Natural killer cell (primary cell): ENCODE measurements at regions of chr4 and their contacts with region 1.

Region 1: DNA sequence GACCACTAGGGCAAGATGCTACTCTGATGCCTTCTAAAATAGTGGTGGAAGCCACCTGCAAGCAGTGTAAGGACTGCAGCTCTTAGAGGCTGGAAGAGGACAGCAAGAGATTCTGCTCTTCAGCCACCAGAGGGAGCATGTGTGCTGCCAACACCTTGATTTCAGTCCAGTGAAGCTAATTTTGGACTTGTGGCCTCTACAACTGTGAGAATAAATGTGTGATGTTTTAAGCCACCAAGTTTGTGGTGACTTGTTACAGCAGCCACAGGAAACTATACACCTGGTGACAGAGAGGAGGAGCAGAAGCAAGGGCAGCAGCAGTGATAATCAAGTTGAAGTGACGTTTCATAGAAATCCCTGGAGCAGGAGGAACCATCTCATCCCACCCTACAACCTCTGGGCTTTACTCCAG is 55.9 kb downstream of the FGFBP1 start:
- DNase-seq: peak; percentile 41 to 81
- ATAC-seq: peak; percentile 92 to 97 (median 96)
- H3K4me3 ChIP-seq: no peak overlapping the region
- H3K4me3 Mint-ChIP-seq: peak overlapping the region; percentile 73
- H3K27ac ChIP-seq: no peak overlapping the region
- H3K27ac Mint-ChIP-seq: peak overlapping the region; percentile 54 to 68
- H3K4me1 ChIP-seq: peaks cover 16% of the 10 kb centered on the region
- H3K4me1 Mint-ChIP-seq: peaks cover 28% of the 10 kb centered on the region in 2 donors
- H3K27me3 ChIP-seq: no peaks in the 10 kb centered on the region
- H3K27me3 Mint-ChIP-seq: no peaks in the 10 kb centered on the region
- CTCF ChIP-seq: peak; percentile 88

Region 2: GRCh38 chr4:15587649-15588048 is 295.0 kb before region 1 on chr4:
- intact Hi-C with region 1: no loop called
- DNase-seq: no peak
- ATAC-seq: no peak
- H3K4me3 ChIP-seq: no peak overlapping the region
- H3K4me3 Mint-ChIP-seq: no peak overlapping the region
- H3K27ac ChIP-seq: no peak overlapping the region
- H3K27ac Mint-ChIP-seq: no peak overlapping the region
- H3K4me1 ChIP-seq: no peaks in the 10 kb centered on the region
- H3K4me1 Mint-ChIP-seq: no peaks in the 10 kb centered on the region
- H3K27me3 ChIP-seq: no peaks in the 10 kb centered on the region
- H3K27me3 Mint-ChIP-seq: no peaks in the 10 kb centered on the region
- CTCF ChIP-seq: no peak

Region 3: DNA sequence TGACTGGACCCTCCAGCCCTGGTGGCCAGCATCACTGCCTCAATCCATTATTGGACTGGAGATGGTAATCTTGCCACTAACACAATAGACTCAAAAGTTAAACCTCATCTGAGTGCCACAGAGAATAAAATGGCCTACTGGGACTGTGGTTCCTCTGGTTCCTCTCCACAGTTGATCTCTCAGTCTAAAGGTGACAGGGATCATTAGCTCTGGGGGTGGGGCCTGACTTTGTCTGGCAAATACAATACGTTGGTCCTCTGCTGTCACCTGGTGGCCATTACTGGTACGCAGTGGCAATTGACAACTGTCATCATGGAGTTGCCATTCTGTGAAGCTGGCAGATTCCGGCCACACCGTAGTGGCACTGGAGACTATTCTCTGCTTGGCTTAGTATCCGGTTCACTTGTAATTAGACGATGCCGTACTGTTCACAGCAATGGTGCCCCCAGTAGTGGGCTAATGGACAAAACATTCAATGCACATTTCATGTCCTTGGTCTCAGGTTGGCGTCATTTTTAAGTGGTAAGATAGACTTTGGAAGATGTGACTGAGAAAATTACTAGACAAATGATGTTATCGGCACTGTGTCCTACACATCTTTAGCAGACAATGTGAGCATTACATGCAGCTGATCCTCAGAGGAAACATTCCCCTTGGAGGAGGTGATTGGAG is 73.6 kb after region 1 on chr4:
- intact Hi-C with region 1: loop called (anchors 1 kb)
- DNase-seq: peak; percentile 75 to 86
- ATAC-seq: peak; percentile 82 to 91 (median 89)
- H3K4me3 ChIP-seq: no peak overlapping the region
- H3K4me3 Mint-ChIP-seq: peak overlapping the region; percentile 70
- H3K27ac ChIP-seq: no peak overlapping the region
- H3K27ac Mint-ChIP-seq: peak overlapping the region; percentile 81 to 83
- H3K4me1 ChIP-seq: peaks cover 16% of the 10 kb centered on the region
- H3K4me1 Mint-ChIP-seq: peaks cover 44 to 55% of the 10 kb centered on the region in 2 donors
- H3K27me3 ChIP-seq: no peaks in the 10 kb centered on the region
- H3K27me3 Mint-ChIP-seq: no peaks in the 10 kb centered on the region
- CTCF ChIP-seq: peak; percentile 86